HCT116 (cell line): ENCODE measurements at regions of chr3 and their contacts with region 1.

Region 1: GRCh38 chr3:168847291-168847883 is 751.7 kb upstream of the GOLIM4 start:
- DNase-seq: no peak
- ATAC-seq: peak; percentile 59; the same call in 1 of the 2 replicates
- H3K4me3 ChIP-seq: no peak overlapping the region
- H3K27ac ChIP-seq: no peak overlapping the region
- H3K4me1 ChIP-seq: no peaks in the 10 kb centered on the region
- H3K27me3 ChIP-seq: peaks cover 25% of the 10 kb centered on the region
- CTCF ChIP-seq: peak; percentile 35 to 76 (median 65); a peak in 5 of 6 replicates
- POLR2A ChIP-seq: no peak
- RAD21 ChIP-seq: peak; percentile 81

Region 2: GRCh38 chr3:167929968-167930367 is 917.4 kb before region 1 on chr3:
- CTCF ChIA-PET with region 1: no interaction called
- POLR2A ChIA-PET with region 1: no interaction called
- RAD21 ChIA-PET with region 1: no interaction called
- intact Hi-C with region 1: loop called (anchors 5 kb)
- DNase-seq: no peak
- ATAC-seq: no peak
- H3K4me3 ChIP-seq: no peak overlapping the region
- H3K27ac ChIP-seq: no peak overlapping the region
- H3K4me1 ChIP-seq: no peaks in the 10 kb centered on the region
- H3K27me3 ChIP-seq: no peaks in the 10 kb centered on the region
- CTCF ChIP-seq: no peak
- POLR2A ChIP-seq: no peak
- RAD21 ChIP-seq: no peak

Region 3: DNA sequence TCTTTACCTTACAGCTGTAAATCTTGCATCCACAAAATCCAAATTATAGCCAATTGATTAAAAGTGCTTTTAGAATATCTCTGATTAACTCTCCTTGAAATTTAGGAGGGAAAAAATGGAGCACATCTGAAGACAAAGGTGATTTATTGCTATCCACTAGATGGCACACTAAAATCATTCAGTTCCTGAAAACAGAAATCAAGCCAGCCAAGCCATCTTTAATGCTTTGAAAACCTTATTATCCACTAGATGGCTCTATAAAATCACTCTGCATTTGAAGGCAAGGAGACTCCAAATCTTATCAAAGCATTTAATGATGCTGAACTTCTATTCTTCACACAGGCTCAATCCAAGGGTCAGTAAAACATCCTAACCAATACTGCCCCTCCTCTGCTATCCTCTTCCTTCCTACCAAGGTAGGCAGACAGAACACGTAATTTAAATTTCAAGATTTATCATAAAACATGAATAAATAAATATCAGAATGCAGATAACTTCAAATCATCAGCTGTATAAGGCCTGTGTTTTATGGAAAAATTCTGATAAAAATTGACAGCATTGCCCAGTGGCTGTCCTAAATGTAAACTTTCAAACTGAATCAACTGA is 800.1 kb before region 1 on chr3:
- CTCF ChIA-PET with region 1: no interaction called
- POLR2A ChIA-PET with region 1: no interaction called
- RAD21 ChIA-PET with region 1: no interaction called
- intact Hi-C with region 1: loop called (anchors 1 kb)
- DNase-seq: peak; percentile 79
- ATAC-seq: peak; percentile 84
- H3K4me3 ChIP-seq: no peak overlapping the region
- H3K27ac ChIP-seq: no peak overlapping the region
- H3K4me1 ChIP-seq: no peaks in the 10 kb centered on the region
- H3K27me3 ChIP-seq: no peaks in the 10 kb centered on the region
- CTCF ChIP-seq: peak; percentile 68 to 99 (median 89)
- POLR2A ChIP-seq: no peak
- RAD21 ChIP-seq: peak; percentile 97

Region 4: GRCh38 chr3:168476360-168476980 is 370.9 kb before region 1 on chr3:
- CTCF ChIA-PET with region 1: no interaction called
- POLR2A ChIA-PET with region 1: no interaction called
- RAD21 ChIA-PET with region 1: no interaction called
- intact Hi-C with region 1: no loop called
- DNase-seq: no peak
- ATAC-seq: no peak
- H3K4me3 ChIP-seq: no peak overlapping the region
- H3K27ac ChIP-seq: no peak overlapping the region
- H3K4me1 ChIP-seq: no peaks in the 10 kb centered on the region
- H3K27me3 ChIP-seq: peaks cover 30% of the 10 kb centered on the region
- CTCF ChIP-seq: no peak
- POLR2A ChIP-seq: no peak
- RAD21 ChIP-seq: no peak

Region 5: GRCh38 chr3:168511428-168512014 is 335.9 kb before region 1 on chr3:
- CTCF ChIA-PET with region 1: interaction called, 22 read pairs
- POLR2A ChIA-PET with region 1: interaction called, 3 read pairs
- RAD21 ChIA-PET with region 1: no interaction called
- intact Hi-C with region 1: loop called (anchors 1 kb)
- DNase-seq: no peak
- ATAC-seq: peak; percentile 60; the same call in 1 of the 2 replicates
- H3K4me3 ChIP-seq: no peak overlapping the region
- H3K27ac ChIP-seq: no peak overlapping the region
- H3K4me1 ChIP-seq: no peaks in the 10 kb centered on the region
- H3K27me3 ChIP-seq: peaks cover 4% of the 10 kb centered on the region
- CTCF ChIP-seq: peak; percentile 32 to 59 (median 57); a peak in 5 of 6 replicates
- POLR2A ChIP-seq: no peak
- RAD21 ChIP-seq: peak; percentile 53

Region 6: GRCh38 chr3:168620826-168621225 is 226.6 kb before region 1 on chr3:
- CTCF ChIA-PET with region 1: interaction called, 14 read pairs
- POLR2A ChIA-PET with region 1: no interaction called
- RAD21 ChIA-PET with region 1: interaction called in 1 of 2 experiments, 6 read pairs
- intact Hi-C with region 1: loop called (anchors 10 kb)
- DNase-seq: peak; percentile 27
- ATAC-seq: peak; percentile 95
- H3K4me3 ChIP-seq: no peak overlapping the region
- H3K27ac ChIP-seq: no peak overlapping the region
- H3K4me1 ChIP-seq: no peaks in the 10 kb centered on the region
- H3K27me3 ChIP-seq: peaks cover 24% of the 10 kb centered on the region
- CTCF ChIP-seq: peak; percentile 57 to 67 (median 66); a peak in 5 of 6 replicates
- POLR2A ChIP-seq: no peak
- RAD21 ChIP-seq: peak; percentile 66

Region 7: GRCh38 chr3:168678730-168679129 is 168.7 kb before region 1 on chr3:
- CTCF ChIA-PET with region 1: no interaction called
- POLR2A ChIA-PET with region 1: no interaction called
- RAD21 ChIA-PET with region 1: no interaction called
- intact Hi-C with region 1: no loop called
- DNase-seq: no peak
- ATAC-seq: no peak
- H3K4me3 ChIP-seq: no peak overlapping the region
- H3K27ac ChIP-seq: no peak overlapping the region
- H3K4me1 ChIP-seq: no peaks in the 10 kb centered on the region
- H3K27me3 ChIP-seq: peaks cover 4% of the 10 kb centered on the region; the same call in 1 of the 2 replicates
- CTCF ChIP-seq: no peak
- POLR2A ChIP-seq: no peak
- RAD21 ChIP-seq: no peak

Region 8: GRCh38 chr3:168782193-168782592 is 65.2 kb before region 1 on chr3:
- CTCF ChIA-PET with region 1: no interaction called
- POLR2A ChIA-PET with region 1: no interaction called
- RAD21 ChIA-PET with region 1: no interaction called
- intact Hi-C with region 1: no loop called
- DNase-seq: no peak
- ATAC-seq: no peak
- H3K4me3 ChIP-seq: no peak overlapping the region
- H3K27ac ChIP-seq: no peak overlapping the region
- H3K4me1 ChIP-seq: no peaks in the 10 kb centered on the region
- H3K27me3 ChIP-seq: no peaks in the 10 kb centered on the region
- CTCF ChIP-seq: no peak
- POLR2A ChIP-seq: no peak
- RAD21 ChIP-seq: no peak

Region 9: GRCh38 chr3:168828943-168829342 is 18.4 kb before region 1 on chr3:
- CTCF ChIA-PET with region 1: interaction called, 10 read pairs
- POLR2A ChIA-PET with region 1: no interaction called
- RAD21 ChIA-PET with region 1: no interaction called
- intact Hi-C with region 1: no loop called
- DNase-seq: no peak
- ATAC-seq: no peak
- H3K4me3 ChIP-seq: no peak overlapping the region
- H3K27ac ChIP-seq: no peak overlapping the region
- H3K4me1 ChIP-seq: no peaks in the 10 kb centered on the region
- H3K27me3 ChIP-seq: 0 out of 2 replicates have a peak, but pooled peaks cover 6% of the 10 kb centered on the region
- CTCF ChIP-seq: no peak
- POLR2A ChIP-seq: no peak
- RAD21 ChIP-seq: no peak

Region 10: DNA sequence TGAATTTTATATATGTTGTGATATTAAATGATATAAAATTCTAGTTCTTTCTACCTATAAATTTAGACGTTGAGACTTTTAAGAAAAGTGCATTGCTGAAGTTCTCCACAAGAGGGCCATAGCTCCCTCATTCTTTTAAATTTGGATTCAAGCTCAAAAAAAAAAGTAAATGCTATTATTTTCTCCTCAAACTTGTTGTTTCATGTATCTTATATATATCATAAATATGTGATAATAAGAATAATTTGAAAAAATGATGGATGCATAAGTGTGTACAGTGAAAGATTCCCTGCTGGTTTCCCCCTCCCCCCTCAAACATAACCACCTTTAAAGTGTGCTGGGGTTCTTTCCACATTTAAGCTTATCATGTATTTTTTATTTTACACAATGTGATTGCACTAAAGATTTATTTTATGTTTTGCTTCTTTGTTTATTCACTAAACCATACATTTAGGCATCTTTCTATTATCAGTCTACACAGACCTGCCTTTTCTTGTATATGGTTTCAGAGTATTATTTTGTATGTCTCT is 17.7 kb after region 1 on chr3:
- CTCF ChIA-PET with region 1: interaction called, 12 read pairs
- POLR2A ChIA-PET with region 1: no interaction called
- RAD21 ChIA-PET with region 1: no interaction called
- intact Hi-C with region 1: no loop called
- DNase-seq: no peak
- ATAC-seq: no peak
- H3K4me3 ChIP-seq: no peak overlapping the region
- H3K27ac ChIP-seq: no peak overlapping the region
- H3K4me1 ChIP-seq: no peaks in the 10 kb centered on the region
- H3K27me3 ChIP-seq: peaks cover 16% of the 10 kb centered on the region
- CTCF ChIP-seq: peak; percentile 52 to 65 (median 61)
- POLR2A ChIP-seq: no peak
- RAD21 ChIP-seq: peak; percentile 60

Region 11: DNA sequence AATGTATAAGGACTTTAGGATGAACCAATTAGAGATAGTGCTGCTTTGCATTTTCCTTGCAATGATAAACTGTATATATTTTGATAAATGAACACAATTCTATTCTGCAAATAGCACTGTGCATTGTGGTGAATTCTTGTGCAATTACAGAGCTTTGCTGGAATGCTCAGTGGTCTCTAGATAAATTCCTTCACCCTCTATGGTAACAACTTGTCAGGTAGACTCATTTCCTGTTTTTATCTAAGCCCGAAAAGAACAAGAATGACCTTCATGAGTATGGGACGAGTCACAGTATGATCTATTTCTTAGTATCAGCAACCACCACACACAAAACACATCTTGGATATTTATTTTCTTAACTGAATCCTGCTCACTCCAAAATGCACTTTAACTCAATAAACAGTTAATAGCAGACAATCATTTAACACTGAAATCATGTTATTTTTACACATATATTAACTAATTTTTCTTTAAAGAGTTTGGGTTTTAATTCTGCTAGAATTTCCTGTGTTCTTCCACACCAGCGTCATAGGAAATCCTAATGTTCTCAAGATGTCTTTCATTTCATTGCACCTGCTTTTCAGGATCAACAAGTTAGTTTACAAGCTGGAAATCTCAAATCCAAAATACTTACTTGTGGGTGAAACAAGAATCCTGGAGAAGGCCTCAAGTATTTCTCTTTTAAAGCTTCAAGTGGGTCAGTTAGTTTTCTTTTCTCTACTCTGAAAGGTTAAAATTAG is 264.9 kb after region 1 on chr3:
- CTCF ChIA-PET with region 1: no interaction called
- POLR2A ChIA-PET with region 1: no interaction called
- RAD21 ChIA-PET with region 1: no interaction called
- intact Hi-C with region 1: no loop called
- DNase-seq: peak; percentile 6
- ATAC-seq: peak; percentile 69; the same call in 1 of the 2 replicates
- H3K4me3 ChIP-seq: no peak overlapping the region
- H3K27ac ChIP-seq: no peak overlapping the region
- H3K4me1 ChIP-seq: peaks cover 8 to 27% of the 10 kb centered on the region in 2 experiments
- H3K27me3 ChIP-seq: no peaks in the 10 kb centered on the region
- CTCF ChIP-seq: no peak
- POLR2A ChIP-seq: no peak
- RAD21 ChIP-seq: no peak